IMR-90 (cell line): ENCODE measurements at regions of chr19 and their contacts with region 1.

Region 1: GRCh38 chr19:6233827-6234511 is 45.8 kb downstream of the MLLT1 start:
- DNase-seq: no peak
- ATAC-seq: no peak
- H3K4me3 ChIP-seq: no peak overlapping the region
- H3K27ac ChIP-seq: peak overlapping the region; percentile 86
- H3K4me1 ChIP-seq: peaks cover 35% of the 10 kb centered on the region
- H3K27me3 ChIP-seq: no peaks in the 10 kb centered on the region
- CTCF ChIP-seq: no peak
- POLR2A ChIP-seq: no peak
- RAD21 ChIP-seq: no peak

Region 2: GRCh38 chr19:6164906-6165531 is 69.0 kb before region 1 on chr19:
- CTCF ChIA-PET with region 1: no interaction called
- POLR2A ChIA-PET with region 1: no interaction called
- dilution Hi-C with region 1: no loop called
- in situ Hi-C with region 1: no loop called
- intact Hi-C with region 1: no loop called
- DNase-seq: no peak
- ATAC-seq: no peak
- H3K4me3 ChIP-seq: no peak overlapping the region
- H3K27ac ChIP-seq: no peak overlapping the region
- H3K4me1 ChIP-seq: no peaks in the 10 kb centered on the region
- H3K27me3 ChIP-seq: no peaks in the 10 kb centered on the region; the same call in 1 of the 2 replicates
- CTCF ChIP-seq: no peak
- POLR2A ChIP-seq: no peak
- RAD21 ChIP-seq: no peak

Region 3: GRCh38 chr19:6273701-6274601 is 40.0 kb after region 1 on chr19:
- CTCF ChIA-PET with region 1: no interaction called
- POLR2A ChIA-PET with region 1: no interaction called
- dilution Hi-C with region 1: no loop called
- in situ Hi-C with region 1: loop called (anchors 10 kb)
- intact Hi-C with region 1: loop called (anchors 5 kb)
- DNase-seq: peak; percentile 88
- ATAC-seq: peak; percentile 67
- H3K4me3 ChIP-seq: peak overlapping the region; percentile 12; the same call in 1 of the 2 replicates
- H3K27ac ChIP-seq: peak overlapping the region; percentile 88
- H3K4me1 ChIP-seq: peaks cover 66% of the 10 kb centered on the region
- H3K27me3 ChIP-seq: no peaks in the 10 kb centered on the region
- CTCF ChIP-seq: no peak
- POLR2A ChIP-seq: peak; percentile 50; the same call in 1 of the 2 replicates
- RAD21 ChIP-seq: no peak